Activated CD8-positive, alpha-beta T cell treated with anti-CD3 and anti-CD28 coated beads for 36 hours (primary cell): ENCODE measurements at regions of chr9 and their contacts with region 1.

Region 1: GRCh38 chr9:130128733-130129431 is 43.3 kb upstream of the NCS1 start:
- DNase-seq: peak; percentile 83
- ATAC-seq: peak; percentile 87
- H3K4me3 Mint-ChIP-seq: peak overlapping the region; percentile 73
- H3K27ac Mint-ChIP-seq: peak overlapping the region; percentile 99
- H3K4me1 Mint-ChIP-seq: peaks cover 52% of the 10 kb centered on the region
- H3K27me3 Mint-ChIP-seq: no peaks in the 10 kb centered on the region
- CTCF ChIP-seq: no peak

Region 2: GRCh38 chr9:130235897-130236668 is 107.2 kb after region 1 on chr9:
- CTCF ChIA-PET with region 1: interaction called, 7 read pairs
- POLR2A ChIA-PET with region 1: interaction called, 7 read pairs
- intact Hi-C with region 1: loop called (anchors 5 kb)
- DNase-seq: peak; percentile 80
- ATAC-seq: no peak
- H3K4me3 Mint-ChIP-seq: no peak overlapping the region
- H3K27ac Mint-ChIP-seq: no peak overlapping the region
- H3K4me1 Mint-ChIP-seq: peaks cover 26% of the 10 kb centered on the region
- H3K27me3 Mint-ChIP-seq: no peaks in the 10 kb centered on the region
- CTCF ChIP-seq: peak; percentile 98